ENCODE measurements at regions of chr12 and their contacts with region 1.

Region 1: DNA sequence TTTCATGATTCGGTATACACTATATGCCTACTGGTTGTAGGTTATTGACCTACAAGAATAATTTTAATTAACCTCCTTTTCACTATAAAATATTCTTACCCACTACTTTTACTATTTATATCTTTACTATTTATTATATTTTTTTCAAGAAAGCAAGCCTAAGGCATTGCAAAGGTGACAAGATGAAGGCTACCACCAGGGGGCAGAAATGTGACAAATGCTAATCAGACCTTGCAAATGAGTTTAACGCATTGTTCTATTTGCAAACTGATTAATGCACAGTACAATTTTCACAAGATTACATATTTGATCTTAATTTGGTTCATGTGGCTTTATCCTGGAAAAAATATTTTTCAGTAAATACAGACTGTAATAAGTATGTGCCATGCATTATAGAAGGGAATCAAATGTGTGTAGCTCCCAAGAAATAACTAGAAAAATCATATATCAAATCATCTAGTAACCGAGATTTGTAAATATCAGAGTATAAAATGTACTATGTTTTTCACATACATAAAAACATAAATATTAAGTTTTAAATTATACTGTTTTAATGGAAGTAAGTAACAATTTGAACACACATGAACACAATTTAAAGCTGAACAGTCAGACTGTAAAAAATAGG is 107.0 kb downstream of the ADAMTS20 start:
- DNase-seq: no peak
- ATAC-seq: peak; percentile 47
- H3K4me3 Mint-ChIP-seq: no peak overlapping the region
- H3K27ac Mint-ChIP-seq: no peak overlapping the region
- H3K4me1 Mint-ChIP-seq: no peaks in the 10 kb centered on the region
- H3K27me3 Mint-ChIP-seq: peaks cover 3% of the 10 kb centered on the region
- CTCF ChIP-seq: no peak

Region 2: GRCh38 chr12:42868291-42868690 is 576.8 kb before region 1 on chr12:
- CTCF ChIA-PET with region 1: no interaction called
- POLR2A ChIA-PET with region 1: no interaction called
- intact Hi-C with region 1: no loop called
- DNase-seq: no peak
- ATAC-seq: no peak
- H3K4me3 Mint-ChIP-seq: no peak overlapping the region
- H3K27ac Mint-ChIP-seq: no peak overlapping the region
- H3K4me1 Mint-ChIP-seq: no peaks in the 10 kb centered on the region
- H3K27me3 Mint-ChIP-seq: no peaks in the 10 kb centered on the region
- CTCF ChIP-seq: no peak

Region 3: GRCh38 chr12:43277651-43278540 is 167.2 kb before region 1 on chr12:
- CTCF ChIA-PET with region 1: no interaction called
- POLR2A ChIA-PET with region 1: no interaction called
- intact Hi-C with region 1: no loop called
- DNase-seq: no peak
- ATAC-seq: peak; percentile 60
- H3K4me3 Mint-ChIP-seq: no peak overlapping the region
- H3K27ac Mint-ChIP-seq: peak overlapping the region; percentile 25
- H3K4me1 Mint-ChIP-seq: peaks cover 34% of the 10 kb centered on the region
- H3K27me3 Mint-ChIP-seq: no peaks in the 10 kb centered on the region
- CTCF ChIP-seq: no peak

Region 4: DNA sequence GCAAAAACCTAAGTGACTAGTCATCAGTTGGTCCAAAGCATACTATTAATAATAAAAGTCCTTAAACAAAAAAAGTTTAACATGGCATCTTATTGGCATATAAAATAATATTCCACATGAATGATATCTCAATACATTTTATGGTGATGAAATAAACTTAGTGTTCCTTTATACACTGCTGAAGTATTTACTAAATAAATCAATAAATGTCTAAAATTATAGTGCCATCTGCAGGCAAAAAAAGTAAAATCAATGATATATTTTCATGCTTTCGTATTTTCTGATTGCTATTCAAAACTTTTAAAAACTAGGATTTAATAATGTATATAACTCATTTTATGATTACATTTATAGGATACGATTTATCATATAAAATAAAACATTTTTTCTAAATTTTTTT is 283.1 kb after region 1 on chr12:
- CTCF ChIA-PET with region 1: no interaction called
- POLR2A ChIA-PET with region 1: no interaction called
- intact Hi-C with region 1: loop called (anchors 1 kb)
- DNase-seq: no peak
- ATAC-seq: no peak
- H3K4me3 Mint-ChIP-seq: no peak overlapping the region
- H3K27ac Mint-ChIP-seq: no peak overlapping the region
- H3K4me1 Mint-ChIP-seq: no peaks in the 10 kb centered on the region
- H3K27me3 Mint-ChIP-seq: no peaks in the 10 kb centered on the region
- CTCF ChIP-seq: no peak

Measured in activated B cell treated with CpG ODN at 0.5 μM for 24 hours (primary cell).